BJ (cell line): ENCODE measurements at regions of chr17 and their contacts with region 1.

Region 1: GRCh38 chr17:45428050-45428617 is 4.5 kb downstream of the ARHGAP27 start:
- DNase-seq: no peak
- H3K4me3 ChIP-seq: no peak overlapping the region
- H3K27me3 ChIP-seq: peaks cover 14% of the 10 kb centered on the region
- CTCF ChIP-seq: peak; percentile 97

Region 2: DNA sequence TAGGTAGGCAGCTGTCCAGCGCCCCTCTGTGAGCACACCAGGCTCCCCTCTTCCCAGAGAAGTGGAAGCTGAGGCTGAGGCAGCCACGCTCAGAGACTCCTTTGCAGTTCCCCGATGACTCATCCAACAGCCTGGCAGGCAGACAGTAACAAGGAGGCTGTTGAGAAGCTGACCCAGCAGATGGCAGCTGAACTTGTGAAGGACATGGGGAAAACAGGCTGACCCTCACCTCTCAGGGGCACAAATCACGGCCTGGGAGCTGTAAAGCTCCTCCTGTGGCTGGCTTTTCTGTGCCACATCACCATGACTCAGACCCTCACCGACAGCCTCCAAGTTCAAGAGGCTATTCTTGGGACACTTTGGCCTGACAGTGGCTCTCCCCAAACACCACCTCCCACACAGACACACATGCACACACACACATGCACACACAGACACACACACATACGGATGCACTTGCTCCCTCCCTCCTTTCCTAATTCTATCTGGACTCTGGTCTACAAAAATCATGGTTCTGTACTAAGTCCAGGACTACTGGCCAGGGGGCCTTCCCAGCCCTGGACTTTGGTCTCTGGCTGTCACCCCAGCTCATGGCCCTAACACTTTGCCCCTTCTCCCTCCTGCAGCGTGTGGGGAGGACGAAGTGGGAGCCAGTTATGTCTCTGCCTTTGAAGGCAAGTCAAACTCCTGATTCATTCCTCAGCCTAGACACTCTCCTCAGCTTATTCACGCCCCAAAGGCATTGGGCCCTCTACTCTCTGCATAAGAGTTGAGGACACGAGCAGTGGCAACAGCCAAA is 134.5 kb before region 1 on chr17:
- CTCF ChIA-PET with region 1: no interaction called
- POLR2A ChIA-PET with region 1: no interaction called
- DNase-seq: no peak
- H3K4me3 ChIP-seq: no peak overlapping the region
- H3K27me3 ChIP-seq: no peaks in the 10 kb centered on the region
- CTCF ChIP-seq: peak; percentile 26; the same call in 1 of the 2 replicates

Region 3: GRCh38 chr17:45394913-45395568 is 33.1 kb before region 1 on chr17:
- CTCF ChIA-PET with region 1: interaction called, 50 read pairs
- POLR2A ChIA-PET with region 1: no interaction called
- DNase-seq: peak; percentile 27
- H3K4me3 ChIP-seq: peak overlapping the region; percentile 4; the same call in 1 of the 2 replicates
- H3K27me3 ChIP-seq: peaks cover 1% of the 10 kb centered on the region; the same call in 1 of the 2 replicates
- CTCF ChIP-seq: peak; percentile 80

Region 4: GRCh38 chr17:45451141-45451540 is 23.0 kb after region 1 on chr17:
- CTCF ChIA-PET with region 1: no interaction called
- POLR2A ChIA-PET with region 1: no interaction called
- DNase-seq: no peak
- H3K4me3 ChIP-seq: no peak overlapping the region
- H3K27me3 ChIP-seq: no peaks in the 10 kb centered on the region
- CTCF ChIP-seq: no peak